ENCODE measurements at regions of chr1 and their contacts with region 1.

Region 1: GRCh38 chr1:156608036-156608674 is 6.9 kb upstream of the GPATCH4 start:
- DNase-seq: peak in 7 of 9 donors; percentile 55 to 79 (median 72)
- ATAC-seq: peak; percentile 97
- H3K4me3 ChIP-seq: no peak overlapping the region
- H3K4me3 Mint-ChIP-seq: no peak overlapping the region
- H3K27ac ChIP-seq: no peak overlapping the region
- H3K27ac Mint-ChIP-seq: no peak overlapping the region
- H3K4me1 ChIP-seq: peaks cover 0 to 4% of the 10 kb centered on the region in 2 donors
- H3K4me1 Mint-ChIP-seq: peaks cover 0 to 12% (median 6%) of the 10 kb centered on the region in 7 donors
- H3K27me3 ChIP-seq: no peaks in the 10 kb centered on the region
- H3K27me3 Mint-ChIP-seq: peaks cover 0 to 27% (median 14%) of the 10 kb centered on the region in 5 donors

Region 2: GRCh38 chr1:156445789-156446263 is 162.3 kb before region 1 on chr1:
- CTCF ChIA-PET with region 1: interaction called, 7 read pairs
- POLR2A ChIA-PET with region 1: interaction called, 4 read pairs
- intact Hi-C with region 1: loop called in 1 of 2 experiments (anchors 2 kb)
- DNase-seq: peak; percentile 60 to 83 (median 74)
- ATAC-seq: peak; percentile 92
- H3K4me3 ChIP-seq: no peak overlapping the region
- H3K4me3 Mint-ChIP-seq: peak overlapping the region in 4 of 10 donors; percentile 8 to 26 (median 13)
- H3K27ac ChIP-seq: no peak overlapping the region
- H3K27ac Mint-ChIP-seq: peak overlapping the region in 2 of 9 donors; percentile 10 to 48
- H3K4me1 ChIP-seq: peaks cover 0 to 6% of the 10 kb centered on the region in 2 donors
- H3K4me1 Mint-ChIP-seq: peaks cover 0 to 9% (median 8%) of the 10 kb centered on the region in 7 donors
- H3K27me3 ChIP-seq: peaks cover 10 to 11% of the 10 kb centered on the region in 2 donors
- H3K27me3 Mint-ChIP-seq: peaks cover 39 to 60% (median 45%) of the 10 kb centered on the region in 5 donors

Region 3: GRCh38 chr1:156480411-156481192 is 127.6 kb before region 1 on chr1:
- CTCF ChIA-PET with region 1: interaction called, 15 read pairs
- POLR2A ChIA-PET with region 1: no interaction called
- intact Hi-C with region 1: loop called (anchors 2 kb)
- DNase-seq: peak; percentile 63 to 88 (median 79)
- ATAC-seq: peak; percentile 87
- H3K4me3 ChIP-seq: no peak overlapping the region
- H3K4me3 Mint-ChIP-seq: peak overlapping the region in 6 of 10 donors; percentile 23 to 51 (median 43)
- H3K27ac ChIP-seq: peak overlapping the region; percentile 46
- H3K27ac Mint-ChIP-seq: peak overlapping the region; percentile 74 to 99 (median 89)
- H3K4me1 ChIP-seq: peaks cover 12 to 25% of the 10 kb centered on the region in 2 donors
- H3K4me1 Mint-ChIP-seq: peaks cover 42 to 67% (median 54%) of the 10 kb centered on the region in 7 donors
- H3K27me3 ChIP-seq: no peaks in the 10 kb centered on the region
- H3K27me3 Mint-ChIP-seq: no peaks in the 10 kb centered on the region

Region 4: GRCh38 chr1:156571949-156572662 is 36.0 kb before region 1 on chr1 and contains the start of gene IQGAP3:
- CTCF ChIA-PET with region 1: interaction called, 3 read pairs
- POLR2A ChIA-PET with region 1: no interaction called
- intact Hi-C with region 1: loop called in 1 of 2 experiments (anchors 5 kb)
- DNase-seq: peak; percentile 49 to 74 (median 63)
- ATAC-seq: peak; percentile 93
- H3K4me3 ChIP-seq: peak within 1 kb of the TSS; percentile 41
- H3K4me3 Mint-ChIP-seq: peak within 1 kb of the TSS; percentile 69 to 94 (median 84)
- H3K27ac ChIP-seq: no peak within 1 kb of the TSS
- H3K27ac Mint-ChIP-seq: peak within 1 kb of the TSS in 5 of 9 donors; percentile 38 to 84 (median 59)
- H3K4me1 ChIP-seq: peaks cover 4 to 9% of the 10 kb centered on the region in 2 donors
- H3K4me1 Mint-ChIP-seq: peaks cover 10 to 27% (median 19%) of the 10 kb centered on the region in 7 donors
- H3K27me3 ChIP-seq: peaks cover 0 to 16% of the 10 kb centered on the region in 2 donors
- H3K27me3 Mint-ChIP-seq: peaks cover 16 to 41% (median 32%) of the 10 kb centered on the region in 5 donors
- total RNA-seq, gene IQGAP3: 0.24 to 14.4 TPM in 2 of 5 experiments, not detected in the others

Region 5: GRCh38 chr1:156583821-156584622 is 24.1 kb before region 1 on chr1:
- CTCF ChIA-PET with region 1: interaction called, 20 read pairs
- POLR2A ChIA-PET with region 1: interaction called, 4 read pairs
- intact Hi-C with region 1: loop called (anchors 1 kb)
- DNase-seq: peak in 8 of 9 donors; percentile 49 to 76 (median 69)
- ATAC-seq: peak; percentile 81
- H3K4me3 ChIP-seq: no peak overlapping the region
- H3K4me3 Mint-ChIP-seq: peak overlapping the region in 8 of 10 donors; percentile 9 to 77 (median 54)
- H3K27ac ChIP-seq: peak overlapping the region; percentile 3
- H3K27ac Mint-ChIP-seq: peak overlapping the region in 8 of 9 donors; percentile 26 to 88 (median 72)
- H3K4me1 ChIP-seq: peaks cover 15 to 25% of the 10 kb centered on the region in 2 donors
- H3K4me1 Mint-ChIP-seq: peaks cover 6 to 40% (median 29%) of the 10 kb centered on the region in 7 donors
- H3K27me3 ChIP-seq: no peaks in the 10 kb centered on the region
- H3K27me3 Mint-ChIP-seq: no peaks in the 10 kb centered on the region

Region 6: GRCh38 chr1:156591432-156592157 is 16.6 kb before region 1 on chr1 and contains the start of gene NAXE:
- CTCF ChIA-PET with region 1: interaction called, 12 read pairs
- POLR2A ChIA-PET with region 1: interaction called, 58 read pairs
- intact Hi-C with region 1: no loop called
- DNase-seq: peak; percentile 54 to 81 (median 65)
- ATAC-seq: peak; percentile 97
- H3K4me3 ChIP-seq: peak within 1 kb of the TSS; percentile 69
- H3K4me3 Mint-ChIP-seq: peak within 1 kb of the TSS; percentile 82 to 93 (median 89)
- H3K27ac ChIP-seq: peak within 1 kb of the TSS; percentile 89
- H3K27ac Mint-ChIP-seq: peak within 1 kb of the TSS; percentile 86 to 98 (median 93)
- H3K4me1 ChIP-seq: peaks cover 8 to 12% of the 10 kb centered on the region in 2 donors
- H3K4me1 Mint-ChIP-seq: peaks cover 16 to 32% (median 28%) of the 10 kb centered on the region in 7 donors
- H3K27me3 ChIP-seq: no peaks in the 10 kb centered on the region
- H3K27me3 Mint-ChIP-seq: no peaks in the 10 kb centered on the region
- total RNA-seq, gene NAXE: 25.6 to 58.8 (median 40.7) TPM

Region 7: DNA sequence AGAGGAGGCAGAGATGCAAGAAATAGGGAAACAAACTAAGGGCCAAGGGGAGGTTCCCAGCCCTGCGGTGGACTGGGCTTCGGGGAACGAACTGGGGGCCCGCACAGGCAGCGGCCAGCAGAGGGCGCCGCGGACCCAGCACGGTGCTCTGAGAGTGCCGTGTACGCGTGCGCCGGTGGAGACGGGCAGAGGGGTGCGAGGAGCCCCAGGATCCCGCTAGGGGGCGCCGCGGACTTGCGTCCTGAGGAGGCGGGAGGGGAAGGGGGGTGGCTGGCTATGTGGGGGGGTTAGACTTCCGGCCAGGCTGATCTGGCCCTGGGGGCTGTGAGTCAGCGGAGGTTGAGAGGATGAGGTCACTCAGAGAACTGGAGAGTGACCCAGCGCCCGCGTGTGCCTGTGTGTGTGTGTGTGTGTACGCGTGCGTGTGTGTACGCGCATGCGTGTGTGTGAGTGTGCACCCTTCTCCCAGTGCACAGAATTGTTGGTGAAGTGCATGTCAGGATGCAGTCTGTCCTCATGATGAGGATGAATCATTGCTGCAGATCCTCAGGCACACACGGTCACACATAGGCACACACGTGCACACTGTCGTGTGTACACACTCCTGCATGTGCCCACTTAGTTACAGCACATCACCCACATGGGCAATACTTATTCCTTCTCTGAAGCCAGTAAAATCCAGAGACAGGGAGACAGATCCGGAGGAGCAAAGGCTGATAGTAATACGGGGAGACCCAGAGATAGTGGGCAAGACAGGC is 52.0 kb after region 1 on chr1:
- CTCF ChIA-PET with region 1: no interaction called
- POLR2A ChIA-PET with region 1: no interaction called
- intact Hi-C with region 1: no loop called
- DNase-seq: peak; percentile 82 to 96 (median 89)
- ATAC-seq: peak; percentile 95
- H3K4me3 ChIP-seq: no peak overlapping the region
- H3K4me3 Mint-ChIP-seq: peak overlapping the region in 9 of 10 donors; percentile 4 to 90 (median 48)
- H3K27ac ChIP-seq: no peak overlapping the region
- H3K27ac Mint-ChIP-seq: peak overlapping the region in 8 of 9 donors; percentile 53 to 87 (median 69)
- H3K4me1 ChIP-seq: peaks cover 32 to 39% of the 10 kb centered on the region in 2 donors
- H3K4me1 Mint-ChIP-seq: peaks cover 33 to 62% (median 44%) of the 10 kb centered on the region in 7 donors
- H3K27me3 ChIP-seq: peaks cover 0 to 13% of the 10 kb centered on the region in 2 donors
- H3K27me3 Mint-ChIP-seq: peaks cover 18 to 30% (median 24%) of the 10 kb centered on the region in 5 donors